ENCODE measurements at regions of chr7 and their contacts with region 1.

Region 1: GRCh38 chr7:6071406-6071805 is 40.2 kb downstream of the ANKRD61 start:
- DNase-seq: no peak
- H3K4me3 ChIP-seq: no peak overlapping the region
- H3K27ac ChIP-seq: no peak overlapping the region
- H3K4me1 ChIP-seq: no peaks in the 10 kb centered on the region
- H3K27me3 ChIP-seq: no peaks in the 10 kb centered on the region
- CTCF ChIP-seq: no peak
- POLR2A ChIP-seq: no peak

Region 2: DNA sequence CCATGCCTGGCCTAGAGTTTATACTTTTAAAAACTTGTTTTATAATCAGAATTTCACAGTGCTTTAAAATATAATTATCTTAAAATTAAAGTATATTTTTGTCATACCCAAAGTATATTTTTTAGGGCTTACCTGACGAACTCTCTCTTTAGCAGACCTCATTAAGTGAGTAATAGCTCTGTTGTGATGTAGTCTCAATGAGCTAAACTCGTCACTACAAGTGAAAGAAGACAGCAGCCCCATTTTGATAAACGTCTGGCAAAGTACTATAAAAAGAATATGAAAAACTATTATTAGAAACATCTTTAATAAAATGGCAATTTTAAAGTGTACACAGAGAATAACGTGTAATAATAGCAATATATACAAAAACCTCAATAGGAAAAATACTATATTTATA is 21.6 kb before region 1 on chr7:
- CTCF ChIA-PET with region 1: no interaction called
- POLR2A ChIA-PET with region 1: no interaction called
- dilution Hi-C with region 1: no loop called
- intact Hi-C with region 1: no loop called
- DNase-seq: no peak
- H3K4me3 ChIP-seq: no peak overlapping the region
- H3K27ac ChIP-seq: no peak overlapping the region
- H3K4me1 ChIP-seq: no peaks in the 10 kb centered on the region
- H3K27me3 ChIP-seq: no peaks in the 10 kb centered on the region
- CTCF ChIP-seq: no peak
- POLR2A ChIP-seq: no peak

Region 3: GRCh38 chr7:6090738-6091505 is 19.5 kb after region 1 on chr7:
- CTCF ChIA-PET with region 1: interaction called, 4 read pairs
- POLR2A ChIA-PET with region 1: no interaction called
- dilution Hi-C with region 1: no loop called
- intact Hi-C with region 1: loop called (anchors 1 kb)
- DNase-seq: no peak
- H3K4me3 ChIP-seq: no peak overlapping the region
- H3K27ac ChIP-seq: no peak overlapping the region
- H3K4me1 ChIP-seq: no peaks in the 10 kb centered on the region
- H3K27me3 ChIP-seq: peaks cover 5% of the 10 kb centered on the region in 2 experiments
- CTCF ChIP-seq: no peak
- POLR2A ChIP-seq: no peak